GM12878 (cell line): ENCODE measurements at regions of chr1 and their contacts with region 1.

Region 1: GRCh38 chr1:168504064-168504837 is 39.5 kb downstream of the XCL2 start:
- DNase-seq: peak; percentile 60
- ATAC-seq: peak; percentile 87
- H3K4me3 ChIP-seq: no peak overlapping the region
- H3K27ac ChIP-seq: no peak overlapping the region
- H3K4me1 ChIP-seq: peaks cover 1% of the 10 kb centered on the region
- H3K27me3 ChIP-seq: no peaks in the 10 kb centered on the region
- CTCF ChIP-seq: no peak
- EP300 ChIP-seq: peak in 1 of 2 experiments; percentile 47; a peak in 1 of 4 replicates
- POLR2A ChIP-seq: no peak
- RAD21 ChIP-seq: no peak

Region 2: DNA sequence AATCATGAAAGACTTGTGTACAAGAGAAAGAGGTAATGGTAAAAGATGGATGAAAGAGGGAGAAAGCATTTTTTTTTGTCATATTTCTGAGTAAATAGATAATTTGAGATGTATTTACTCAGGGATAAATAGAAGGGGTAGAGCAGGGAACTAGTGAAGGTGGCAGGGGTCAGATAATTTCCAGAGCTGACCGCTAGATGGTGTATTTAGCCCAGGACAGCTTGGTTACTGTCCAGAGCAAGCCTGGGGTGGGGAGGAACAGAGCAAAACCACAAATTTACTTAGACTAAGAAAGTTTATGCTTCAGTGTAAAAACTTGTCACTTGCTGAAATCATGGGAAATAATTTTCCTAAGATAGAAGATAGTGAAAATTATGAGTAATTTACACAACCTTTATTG is 51.9 kb before region 1 on chr1:
- CTCF ChIA-PET with region 1: interaction called, 8 read pairs
- POLR2A ChIA-PET with region 1: no interaction called
- RAD21 ChIA-PET with region 1: interaction called, 114 read pairs
- SMC1A ChIA-PET with region 1: interaction called, 136 read pairs
- in situ Hi-C with region 1: no loop called
- intact Hi-C with region 1: no loop called
- DNase-seq: no peak
- ATAC-seq: peak; percentile 63
- H3K4me3 ChIP-seq: no peak overlapping the region
- H3K27ac ChIP-seq: no peak overlapping the region
- H3K4me1 ChIP-seq: no peaks in the 10 kb centered on the region
- H3K27me3 ChIP-seq: no peaks in the 10 kb centered on the region
- CTCF ChIP-seq: peak; percentile 24 to 32 (median 29); a peak in 2 of 6 replicates
- EP300 ChIP-seq: no peak
- POLR2A ChIP-seq: no peak
- RAD21 ChIP-seq: peak; percentile 42

Region 3: DNA sequence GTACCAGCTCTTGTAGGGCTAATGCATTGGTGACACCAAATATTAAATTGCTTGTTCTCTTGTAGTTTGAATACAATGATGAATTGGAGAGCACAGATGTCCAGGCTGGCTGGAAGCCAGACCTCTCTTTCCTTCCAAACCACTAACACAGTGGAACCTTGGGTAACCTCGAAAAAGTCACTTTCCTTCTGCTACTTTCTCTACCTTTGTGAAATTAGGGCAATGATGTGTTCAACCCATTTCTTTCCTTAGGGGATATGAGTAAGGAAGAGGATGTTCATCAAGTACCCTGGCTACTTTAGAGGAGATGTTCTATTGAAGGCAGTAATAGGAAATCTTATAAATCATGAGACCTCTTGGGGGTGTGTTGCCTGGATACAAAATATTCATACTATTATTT is 16.1 kb before region 1 on chr1:
- CTCF ChIA-PET with region 1: interaction called, 5 read pairs
- POLR2A ChIA-PET with region 1: interaction called, 4 read pairs
- RAD21 ChIA-PET with region 1: interaction called, 10 read pairs
- SMC1A ChIA-PET with region 1: interaction called, 21 read pairs
- in situ Hi-C with region 1: no loop called
- intact Hi-C with region 1: no loop called
- DNase-seq: no peak
- ATAC-seq: no peak
- H3K4me3 ChIP-seq: no peak overlapping the region
- H3K27ac ChIP-seq: no peak overlapping the region
- H3K4me1 ChIP-seq: no peaks in the 10 kb centered on the region
- H3K27me3 ChIP-seq: no peaks in the 10 kb centered on the region
- CTCF ChIP-seq: no peak
- EP300 ChIP-seq: no peak
- POLR2A ChIP-seq: no peak
- RAD21 ChIP-seq: no peak

Region 4: DNA sequence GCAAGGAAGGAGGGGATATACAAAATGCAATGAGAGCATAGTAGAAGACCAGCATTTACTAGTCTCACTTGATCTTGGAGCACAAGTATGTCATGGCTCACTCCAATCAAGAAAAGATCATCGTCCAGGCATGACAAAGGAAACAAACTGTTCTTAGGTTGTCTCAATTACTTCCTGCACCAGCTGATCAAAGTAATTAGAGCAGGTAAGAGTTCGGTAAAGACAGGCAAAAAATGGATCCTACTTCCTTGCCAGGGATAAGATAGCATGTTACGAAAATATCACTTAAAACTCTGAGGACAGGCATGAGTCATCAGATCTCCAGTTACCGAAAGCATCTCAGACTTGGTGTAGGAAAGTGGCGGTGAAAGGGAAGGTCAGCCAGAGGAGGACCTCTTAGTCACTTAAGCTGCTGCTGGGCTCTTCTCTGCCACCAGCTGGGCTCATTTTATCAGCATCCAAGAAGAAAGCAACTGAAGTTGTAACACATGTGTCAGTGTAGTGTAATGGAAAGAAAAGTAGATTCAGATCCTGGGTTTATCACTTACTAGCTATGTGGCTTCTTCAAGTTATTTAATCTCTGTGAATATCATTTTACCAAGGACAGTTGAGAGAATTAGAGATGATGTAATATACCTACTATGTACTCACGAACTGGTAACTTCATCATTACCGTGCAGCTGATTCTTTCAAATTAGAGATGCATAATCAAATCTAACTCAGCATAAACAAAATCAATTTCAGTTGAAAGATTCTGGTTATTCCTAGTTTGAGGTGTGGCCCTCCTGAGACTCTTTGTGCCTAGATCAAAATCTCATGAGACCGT is 119.0 kb after region 1 on chr1:
- CTCF ChIA-PET with region 1: no interaction called
- POLR2A ChIA-PET with region 1: no interaction called
- RAD21 ChIA-PET with region 1: no interaction called
- SMC1A ChIA-PET with region 1: no interaction called
- in situ Hi-C with region 1: no loop called
- intact Hi-C with region 1: no loop called
- DNase-seq: no peak
- ATAC-seq: no peak
- H3K4me3 ChIP-seq: no peak overlapping the region
- H3K27ac ChIP-seq: no peak overlapping the region
- H3K4me1 ChIP-seq: no peaks in the 10 kb centered on the region
- H3K27me3 ChIP-seq: no peaks in the 10 kb centered on the region
- CTCF ChIP-seq: no peak
- EP300 ChIP-seq: no peak
- POLR2A ChIP-seq: no peak
- RAD21 ChIP-seq: no peak

Region 5: DNA sequence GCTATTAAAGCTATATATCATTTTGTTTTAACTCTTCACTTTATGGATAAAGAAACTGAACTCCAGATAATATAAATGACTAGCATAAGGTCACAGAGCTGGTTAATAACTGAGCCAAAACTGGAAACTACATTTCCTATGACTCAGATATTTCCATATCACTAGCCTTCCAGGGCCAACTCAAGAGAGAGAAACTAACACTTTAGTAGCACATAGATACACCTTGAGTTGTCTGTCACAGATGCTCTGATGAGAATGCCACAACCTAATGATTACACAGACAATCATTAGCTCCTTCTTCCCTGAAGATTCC is 822.7 kb after region 1 on chr1:
- CTCF ChIA-PET with region 1: no interaction called
- POLR2A ChIA-PET with region 1: no interaction called
- RAD21 ChIA-PET with region 1: no interaction called
- SMC1A ChIA-PET with region 1: no interaction called
- in situ Hi-C with region 1: no loop called
- intact Hi-C with region 1: no loop called
- DNase-seq: peak; percentile 28
- ATAC-seq: peak; percentile 94
- H3K4me3 ChIP-seq: no peak overlapping the region
- H3K27ac ChIP-seq: no peak overlapping the region
- H3K4me1 ChIP-seq: no peaks in the 10 kb centered on the region
- H3K27me3 ChIP-seq: no peaks in the 10 kb centered on the region
- CTCF ChIP-seq: no peak
- EP300 ChIP-seq: no peak
- POLR2A ChIP-seq: no peak
- RAD21 ChIP-seq: no peak